GM12878 (cell line): ENCODE measurements at regions of chr3 and their contacts with region 1.

Region 1: GRCh38 chr3:112973325-112974177 is 1.4 kb downstream of the CD200R1 start:
- DNase-seq: peak; percentile 66
- ATAC-seq: peak; percentile 90
- H3K4me3 ChIP-seq: peak overlapping the region; percentile 45
- H3K27ac ChIP-seq: peak overlapping the region; percentile 77
- H3K4me1 ChIP-seq: peaks cover 34% of the 10 kb centered on the region
- H3K27me3 ChIP-seq: no peaks in the 10 kb centered on the region
- CTCF ChIP-seq: no peak
- EP300 ChIP-seq: peak; percentile 57 to 67; a peak in 2 of 4 replicates
- POLR2A ChIP-seq: no peak
- RAD21 ChIP-seq: no peak

Region 2: GRCh38 chr3:112814266-112814665 is 159.3 kb before region 1 on chr3:
- CTCF ChIA-PET with region 1: interaction called, 14 read pairs
- POLR2A ChIA-PET with region 1: no interaction called
- RAD21 ChIA-PET with region 1: interaction called, 4 read pairs
- SMC1A ChIA-PET with region 1: interaction called, 12 read pairs
- in situ Hi-C with region 1: no loop called
- intact Hi-C with region 1: loop called (anchors 5 kb)
- DNase-seq: no peak
- ATAC-seq: peak; percentile 29; the same call in 1 of the 3 replicates
- H3K4me3 ChIP-seq: no peak overlapping the region
- H3K27ac ChIP-seq: no peak overlapping the region
- H3K4me1 ChIP-seq: peaks cover 19% of the 10 kb centered on the region
- H3K27me3 ChIP-seq: no peaks in the 10 kb centered on the region
- CTCF ChIP-seq: peak; percentile 1 to 12 (median 10); a peak in 1 of 6 replicates
- EP300 ChIP-seq: no peak
- POLR2A ChIP-seq: no peak
- RAD21 ChIP-seq: peak; percentile 40

Region 3: DNA sequence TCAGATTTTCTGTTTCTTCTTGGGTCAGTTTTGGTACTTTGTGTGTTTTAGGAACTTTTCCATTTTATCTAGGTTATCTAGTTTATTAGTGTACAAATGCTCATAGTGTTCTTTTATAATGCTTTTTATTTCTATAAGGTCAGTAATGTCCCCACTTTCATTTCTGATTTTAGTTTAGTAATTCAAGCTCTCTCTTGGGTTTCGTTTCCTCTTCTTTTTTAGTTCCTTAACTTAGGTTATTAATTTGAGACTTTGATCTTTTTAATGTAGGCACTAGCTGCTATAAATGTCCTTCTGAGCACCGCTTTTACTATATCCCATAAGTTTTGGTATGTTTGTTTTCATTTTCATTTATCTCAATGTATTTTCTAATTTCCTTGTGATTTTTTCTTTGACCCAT is 99.9 kb before region 1 on chr3:
- CTCF ChIA-PET with region 1: interaction called, 5 read pairs
- POLR2A ChIA-PET with region 1: no interaction called
- RAD21 ChIA-PET with region 1: interaction called, 4 read pairs
- SMC1A ChIA-PET with region 1: no interaction called
- in situ Hi-C with region 1: no loop called
- intact Hi-C with region 1: loop called (anchors 5 kb)
- DNase-seq: no peak
- ATAC-seq: peak; percentile 94
- H3K4me3 ChIP-seq: 0 out of 2 replicates have a peak overlapping the region, but pooled peaks have one; percentile 46
- H3K27ac ChIP-seq: peak overlapping the region; percentile 56
- H3K4me1 ChIP-seq: peaks cover 7% of the 10 kb centered on the region
- H3K27me3 ChIP-seq: no peaks in the 10 kb centered on the region
- CTCF ChIP-seq: no peak
- EP300 ChIP-seq: no peak
- POLR2A ChIP-seq: no peak
- RAD21 ChIP-seq: no peak

Region 4: GRCh38 chr3:112925969-112926368 is 47.6 kb before region 1 on chr3:
- CTCF ChIA-PET with region 1: interaction called, 5 read pairs
- POLR2A ChIA-PET with region 1: no interaction called
- RAD21 ChIA-PET with region 1: no interaction called
- SMC1A ChIA-PET with region 1: interaction called, 5 read pairs
- in situ Hi-C with region 1: no loop called
- intact Hi-C with region 1: loop called (anchors 5 kb)
- DNase-seq: no peak
- ATAC-seq: peak; percentile 62
- H3K4me3 ChIP-seq: peak overlapping the region; percentile 28; the same call in 1 of the 2 replicates
- H3K27ac ChIP-seq: peak overlapping the region; percentile 27
- H3K4me1 ChIP-seq: no peaks in the 10 kb centered on the region; the same call in none of the 2 replicates
- H3K27me3 ChIP-seq: no peaks in the 10 kb centered on the region
- CTCF ChIP-seq: no peak
- EP300 ChIP-seq: no peak
- POLR2A ChIP-seq: no peak
- RAD21 ChIP-seq: no peak

Region 5: DNA sequence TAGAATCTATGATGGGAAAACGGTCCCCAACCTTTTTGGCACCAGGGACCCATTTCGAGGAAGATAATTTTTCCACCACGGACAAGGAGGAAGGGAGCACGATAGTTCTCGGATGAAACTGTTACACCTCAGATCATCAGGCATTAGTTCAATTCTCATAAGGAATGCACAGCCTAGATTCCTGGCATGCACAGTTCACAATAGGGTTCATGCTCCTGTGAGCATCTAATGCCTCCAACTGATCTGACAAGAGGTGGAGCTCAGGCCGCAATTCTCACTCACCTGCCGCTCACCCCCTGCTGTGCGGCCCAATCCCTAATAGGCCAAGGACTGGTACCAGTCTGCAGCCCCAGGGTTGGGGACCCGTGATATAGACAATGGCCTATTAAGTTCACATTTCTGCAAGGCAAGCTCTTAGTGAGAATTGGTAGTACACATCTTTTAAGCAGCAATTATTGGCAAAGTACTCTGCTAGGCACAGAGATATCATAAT is 25.2 kb before region 1 on chr3:
- CTCF ChIA-PET with region 1: no interaction called
- POLR2A ChIA-PET with region 1: no interaction called
- RAD21 ChIA-PET with region 1: no interaction called
- SMC1A ChIA-PET with region 1: no interaction called
- in situ Hi-C with region 1: no loop called
- intact Hi-C with region 1: no loop called
- DNase-seq: no peak
- ATAC-seq: no peak
- H3K4me3 ChIP-seq: no peak overlapping the region
- H3K27ac ChIP-seq: no peak overlapping the region
- H3K4me1 ChIP-seq: no peaks in the 10 kb centered on the region
- H3K27me3 ChIP-seq: no peaks in the 10 kb centered on the region
- CTCF ChIP-seq: no peak
- EP300 ChIP-seq: no peak
- POLR2A ChIP-seq: no peak
- RAD21 ChIP-seq: no peak

Region 6: DNA sequence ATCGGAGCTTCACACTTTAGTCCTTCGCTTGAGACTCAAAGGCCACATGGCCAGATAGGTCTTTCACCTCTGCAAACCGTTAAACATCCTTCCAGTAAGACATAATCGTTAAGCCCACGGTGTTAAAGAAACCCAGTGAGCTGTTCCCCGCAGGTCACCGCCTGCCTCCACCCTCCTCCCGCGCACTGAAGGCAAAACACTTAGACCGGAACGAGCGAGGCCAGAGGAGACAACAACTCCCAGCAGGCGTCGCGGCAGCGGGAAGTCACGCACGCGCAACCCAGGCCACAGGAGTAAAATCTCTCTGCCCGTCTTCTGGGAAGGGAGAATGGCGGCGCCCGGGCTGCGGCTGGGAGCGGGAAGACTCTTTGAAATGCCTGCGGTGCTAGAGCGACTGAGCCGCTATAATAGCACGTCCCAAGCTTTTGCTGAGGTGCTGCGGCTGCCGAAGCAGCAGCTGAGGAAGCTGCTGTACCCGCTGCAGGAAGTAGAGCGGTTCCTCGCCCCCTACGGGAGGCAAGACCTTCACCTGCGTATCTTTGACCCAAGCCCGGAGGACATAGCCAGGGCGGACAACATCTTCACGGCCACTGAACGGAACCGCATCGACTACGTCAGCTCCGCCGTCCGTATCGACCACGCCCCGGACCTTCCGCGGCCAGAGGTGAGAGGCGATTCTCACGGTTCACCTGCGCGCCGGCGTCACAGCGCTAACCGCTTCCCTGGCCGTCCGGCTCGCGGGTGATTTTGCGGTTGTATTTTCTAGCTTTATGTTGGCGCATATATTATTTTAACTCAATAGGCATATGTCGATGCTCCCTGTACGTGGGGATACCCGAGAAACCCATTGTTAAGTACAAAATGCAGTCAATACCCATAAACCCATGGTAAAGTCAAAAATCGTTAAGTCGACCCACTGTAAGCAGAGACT is 17.4 kb after region 1 on chr3 and contains the start of gene GTPBP8:
- CTCF ChIA-PET with region 1: interaction called, 39 read pairs
- POLR2A ChIA-PET with region 1: no interaction called
- RAD21 ChIA-PET with region 1: interaction called, 9 read pairs
- SMC1A ChIA-PET with region 1: interaction called, 10 read pairs
- in situ Hi-C with region 1: no loop called
- intact Hi-C with region 1: no loop called
- DNase-seq: peak; percentile 69
- ATAC-seq: peak; percentile 94
- H3K4me3 ChIP-seq: peak within 1 kb of the TSS; percentile 69
- H3K27ac ChIP-seq: peak within 1 kb of the TSS; percentile 90
- H3K4me1 ChIP-seq: peaks cover 6% of the 10 kb centered on the region
- H3K27me3 ChIP-seq: no peaks in the 10 kb centered on the region
- CTCF ChIP-seq: no peak
- EP300 ChIP-seq: peak; percentile 65 to 82; a peak in 3 of 4 replicates
- POLR2A ChIP-seq: peak; percentile 88
- RAD21 ChIP-seq: no peak
- polyA plus RNA-seq, gene GTPBP8: 18.8 to 29.0 TPM